ENCODE measurements at regions of chr17 and their contacts with region 1.

Region 1: DNA sequence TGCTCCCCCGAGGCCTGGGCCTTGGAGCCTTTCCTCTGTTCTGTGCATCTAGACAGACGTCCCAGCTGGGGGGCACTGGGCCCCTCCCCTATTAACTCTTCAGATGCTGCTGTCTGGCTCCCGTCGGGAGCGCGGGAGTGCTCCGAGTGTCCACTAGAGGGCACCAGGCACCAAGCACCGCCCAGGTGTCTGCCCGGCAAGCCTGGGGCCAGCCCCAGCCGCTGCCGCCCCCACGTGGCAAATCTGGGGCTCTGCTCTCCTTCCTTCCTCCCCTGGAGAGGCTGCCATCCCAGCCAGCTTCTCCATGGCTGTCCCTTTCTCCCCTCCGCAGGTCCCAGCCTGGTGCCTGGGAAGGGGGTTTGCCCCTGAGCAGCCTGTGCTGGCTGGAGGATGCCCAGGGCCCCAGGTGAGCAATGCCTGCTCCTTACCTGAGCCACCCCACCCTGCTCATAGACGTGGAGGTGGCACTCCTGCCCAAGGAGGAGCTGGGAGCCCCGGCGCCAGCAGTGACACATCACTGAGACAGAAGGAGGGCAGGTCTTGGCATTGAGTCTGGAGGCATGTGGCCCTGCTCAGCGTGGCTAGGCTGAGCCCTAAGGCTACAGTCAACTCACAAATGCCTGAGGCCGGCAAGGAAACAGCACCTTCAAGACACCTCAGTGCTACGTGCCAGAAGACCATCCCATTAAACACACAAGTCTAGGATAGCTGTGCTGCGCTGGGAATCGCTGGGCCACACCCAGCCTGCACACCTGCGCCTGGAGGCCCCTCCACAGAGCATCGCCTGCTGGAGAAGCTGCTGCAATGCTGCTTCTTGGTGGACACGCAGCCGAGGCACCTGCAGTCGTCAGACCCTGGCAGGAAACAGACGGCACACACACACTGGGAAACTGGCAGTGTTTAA is 19.7 kb downstream of the TMEM235 start:
- DNase-seq: peak; percentile 73 to 92 (median 84)
- ATAC-seq: peak; percentile 35
- H3K4me3 ChIP-seq: peak overlapping the region; percentile 52
- H3K4me3 Mint-ChIP-seq: peak overlapping the region; percentile 96
- H3K27ac ChIP-seq: peak overlapping the region; percentile 22 to 84
- H3K27ac Mint-ChIP-seq: peak overlapping the region; percentile 98
- H3K4me1 ChIP-seq: peaks cover 72% of the 10 kb centered on the region
- H3K4me1 Mint-ChIP-seq: peaks cover 51% of the 10 kb centered on the region
- H3K27me3 ChIP-seq: no peaks in the 10 kb centered on the region
- H3K27me3 Mint-ChIP-seq: no peaks in the 10 kb centered on the region
- CTCF ChIP-seq: peak; percentile 100

Region 2: DNA sequence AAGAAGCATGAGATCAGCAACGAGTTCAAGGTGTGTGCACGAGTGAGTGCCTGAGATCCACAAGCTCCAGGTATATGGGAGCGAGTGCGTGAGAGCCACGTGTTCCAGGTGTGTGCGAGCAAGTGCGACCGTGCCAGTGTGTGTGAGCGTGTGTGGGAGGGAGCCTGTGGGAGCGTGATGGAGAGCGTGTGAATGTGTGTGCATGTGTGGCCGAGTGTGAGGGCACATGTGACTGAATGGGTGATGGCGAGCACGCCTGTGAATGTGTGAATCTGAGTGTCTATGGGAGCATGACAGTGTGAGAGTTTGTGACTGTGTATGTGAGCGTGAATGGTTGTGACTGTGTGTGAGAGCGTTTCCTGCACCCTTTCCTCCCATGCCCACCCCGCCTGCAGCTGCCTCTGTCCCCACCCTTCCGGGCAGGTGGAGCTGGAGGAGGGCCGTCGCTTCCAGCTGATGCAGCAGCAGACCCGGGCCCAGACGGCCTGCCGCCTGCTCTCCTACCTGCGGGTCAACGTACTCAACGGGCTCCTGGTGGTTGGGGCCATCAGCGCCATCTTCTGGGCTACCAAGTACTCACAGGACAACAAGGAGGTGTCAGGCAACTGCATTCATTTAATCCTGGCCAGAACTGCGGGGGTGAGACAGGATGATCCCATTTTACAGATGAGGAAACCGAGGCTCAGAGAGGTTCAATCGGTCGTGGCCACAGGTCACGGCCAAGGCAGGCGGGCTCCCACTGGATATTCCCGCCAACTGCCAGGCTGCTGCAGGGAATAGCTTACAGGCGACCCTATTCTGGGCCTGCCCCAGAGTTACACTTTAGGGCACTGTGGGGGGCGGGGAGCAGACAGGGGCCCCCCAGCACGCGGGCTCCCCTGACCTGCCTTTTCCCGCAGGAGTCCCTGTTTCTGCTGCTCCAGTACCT is 116.9 kb before region 1 on chr17:
- CTCF ChIA-PET with region 1: no interaction called
- POLR2A ChIA-PET with region 1: interaction called, 20 read pairs
- intact Hi-C with region 1: loop called (anchors 5 kb)
- DNase-seq: peak; percentile 71 to 93 (median 78)
- ATAC-seq: peak; percentile 34
- H3K4me3 ChIP-seq: peak overlapping the region; percentile 94
- H3K4me3 Mint-ChIP-seq: peak overlapping the region; percentile 88
- H3K27ac ChIP-seq: peak overlapping the region; percentile 7 to 92
- H3K27ac Mint-ChIP-seq: peak overlapping the region; percentile 81
- H3K4me1 ChIP-seq: peaks cover 90% of the 10 kb centered on the region
- H3K4me1 Mint-ChIP-seq: peaks cover 80% of the 10 kb centered on the region
- H3K27me3 ChIP-seq: no peaks in the 10 kb centered on the region
- H3K27me3 Mint-ChIP-seq: no peaks in the 10 kb centered on the region
- CTCF ChIP-seq: peak; percentile 75

Region 3: DNA sequence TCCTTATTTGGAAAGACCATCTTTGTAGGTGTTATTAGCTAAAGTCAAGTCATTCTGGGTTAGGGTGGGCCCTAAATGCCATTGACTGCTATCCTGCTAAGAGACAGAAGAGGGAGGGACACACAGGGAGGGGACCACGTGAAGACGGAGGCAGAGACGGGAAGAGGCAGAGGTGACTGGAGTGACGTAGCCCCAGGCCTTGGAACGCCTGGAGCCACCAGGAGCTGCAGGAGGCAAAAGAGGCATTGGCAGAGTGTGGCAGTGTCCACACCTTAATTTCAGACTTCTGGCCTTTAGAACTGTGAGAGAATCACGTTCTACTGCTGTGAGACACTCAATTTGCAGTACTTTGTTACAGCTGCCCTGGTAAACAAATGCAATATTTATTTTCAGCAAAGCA is 50.7 kb before region 1 on chr17:
- CTCF ChIA-PET with region 1: no interaction called
- POLR2A ChIA-PET with region 1: no interaction called
- intact Hi-C with region 1: no loop called
- DNase-seq: no peak
- ATAC-seq: no peak
- H3K4me3 ChIP-seq: no peak overlapping the region
- H3K4me3 Mint-ChIP-seq: no peak overlapping the region
- H3K27ac ChIP-seq: no peak overlapping the region
- H3K27ac Mint-ChIP-seq: no peak overlapping the region
- H3K4me1 ChIP-seq: peaks cover 3% of the 10 kb centered on the region
- H3K4me1 Mint-ChIP-seq: no peaks in the 10 kb centered on the region
- H3K27me3 ChIP-seq: no peaks in the 10 kb centered on the region
- H3K27me3 Mint-ChIP-seq: no peaks in the 10 kb centered on the region
- CTCF ChIP-seq: no peak

Region 4: DNA sequence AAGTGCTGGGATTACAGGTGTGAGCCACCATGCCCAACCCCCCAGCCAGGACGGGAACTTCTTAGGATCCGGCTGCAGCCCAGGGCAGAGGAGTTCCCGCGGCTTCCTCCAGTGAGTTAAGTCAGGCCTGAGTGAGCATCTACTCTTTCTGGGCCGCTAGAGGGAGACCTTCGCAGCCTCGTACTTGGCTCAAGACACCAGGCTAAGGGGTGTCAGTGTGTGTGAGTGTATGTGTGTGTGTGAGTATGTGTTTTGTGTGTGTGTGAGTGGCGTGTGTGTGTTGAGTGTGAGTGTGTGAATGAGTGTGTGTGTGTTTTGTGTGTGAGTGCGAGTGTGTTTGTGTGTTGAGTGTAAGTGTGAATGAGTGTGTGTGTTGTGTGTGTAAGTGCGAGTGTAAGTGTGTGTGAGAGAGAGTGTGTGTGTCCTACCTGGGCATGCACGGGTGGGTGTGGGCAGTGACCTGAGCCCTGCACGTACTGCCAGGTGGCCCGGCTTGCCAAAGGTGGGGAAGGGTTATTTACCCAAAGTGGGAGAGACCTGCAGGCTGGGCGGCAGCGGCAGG is 38.7 kb after region 1 on chr17:
- CTCF ChIA-PET with region 1: interaction called, 18 read pairs
- POLR2A ChIA-PET with region 1: interaction called, 5 read pairs
- intact Hi-C with region 1: loop called (anchors 2 to 5 kb)
- DNase-seq: peak; percentile 62 to 91 (median 72)
- ATAC-seq: peak; percentile 98
- H3K4me3 ChIP-seq: no peak overlapping the region
- H3K4me3 Mint-ChIP-seq: no peak overlapping the region
- H3K27ac ChIP-seq: no peak overlapping the region
- H3K27ac Mint-ChIP-seq: no peak overlapping the region
- H3K4me1 ChIP-seq: peaks cover 16% of the 10 kb centered on the region
- H3K4me1 Mint-ChIP-seq: no peaks in the 10 kb centered on the region
- H3K27me3 ChIP-seq: no peaks in the 10 kb centered on the region
- H3K27me3 Mint-ChIP-seq: no peaks in the 10 kb centered on the region
- CTCF ChIP-seq: peak; percentile 77

Region 5: GRCh38 chr17:78329263-78330059 is 78.3 kb after region 1 on chr17:
- CTCF ChIA-PET with region 1: no interaction called
- POLR2A ChIA-PET with region 1: no interaction called
- intact Hi-C with region 1: no loop called
- DNase-seq: peak in 3 of 14 experiments; percentile 43 to 72 (median 65)
- ATAC-seq: no peak
- H3K4me3 ChIP-seq: no peak overlapping the region
- H3K4me3 Mint-ChIP-seq: no peak overlapping the region
- H3K27ac ChIP-seq: no peak overlapping the region
- H3K27ac Mint-ChIP-seq: peak overlapping the region; percentile 37
- H3K4me1 ChIP-seq: peaks cover 39% of the 10 kb centered on the region
- H3K4me1 Mint-ChIP-seq: peaks cover 35% of the 10 kb centered on the region
- H3K27me3 ChIP-seq: no peaks in the 10 kb centered on the region
- H3K27me3 Mint-ChIP-seq: no peaks in the 10 kb centered on the region
- CTCF ChIP-seq: no peak

Region 6: DNA sequence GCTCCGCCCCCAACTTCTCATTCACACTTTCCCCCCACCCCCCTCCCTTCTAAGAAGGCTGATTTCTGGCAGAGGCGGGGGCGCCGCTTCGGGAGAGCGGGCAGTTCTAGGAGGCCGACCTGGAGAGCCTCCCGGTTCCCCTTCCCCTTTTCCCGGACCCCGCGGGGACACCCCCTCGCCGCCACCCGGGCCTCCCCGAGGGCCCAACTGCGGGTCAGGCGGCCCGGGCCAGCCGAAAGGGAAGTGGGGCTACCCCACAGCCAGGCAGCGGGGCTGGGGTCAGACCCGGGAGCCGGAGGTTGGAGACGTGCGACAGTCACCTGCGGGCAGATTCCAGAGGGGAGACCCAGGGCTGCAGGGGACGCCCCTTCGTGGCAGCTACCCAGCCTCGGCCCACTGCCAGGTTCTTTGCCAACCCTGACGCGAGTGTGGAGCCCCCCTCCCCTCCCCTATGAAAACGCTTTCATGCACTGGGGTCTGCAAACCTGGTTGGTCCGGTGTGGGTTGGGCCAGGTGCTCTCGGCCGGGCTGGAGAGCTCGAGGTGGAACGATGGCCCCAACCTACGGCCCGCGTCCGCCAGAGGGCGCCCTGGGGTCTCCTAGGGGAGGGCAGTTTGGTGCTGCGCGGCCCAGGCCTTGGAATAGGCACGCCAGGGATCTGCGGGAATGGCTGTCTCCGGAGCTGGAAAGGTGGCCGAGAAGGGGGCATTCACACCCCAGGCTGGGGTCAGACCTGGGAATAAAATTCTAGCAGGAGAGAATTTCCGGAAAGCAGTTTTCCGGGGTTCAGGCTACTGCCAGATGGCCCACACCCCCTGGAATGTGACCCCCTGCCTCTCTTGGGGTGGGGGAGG is 109.5 kb after region 1 on chr17:
- CTCF ChIA-PET with region 1: interaction called, 12 read pairs
- POLR2A ChIA-PET with region 1: interaction called, 10 read pairs
- intact Hi-C with region 1: loop called (anchors 1 to 2 kb)
- DNase-seq: peak; percentile 78 to 95 (median 89)
- ATAC-seq: peak; percentile 13
- H3K4me3 ChIP-seq: peak overlapping the region; percentile 85
- H3K4me3 Mint-ChIP-seq: peak overlapping the region; percentile 95
- H3K27ac ChIP-seq: peak overlapping the region in 1 of 2 donors; percentile 67
- H3K27ac Mint-ChIP-seq: peak overlapping the region; percentile 97
- H3K4me1 ChIP-seq: peaks cover 47% of the 10 kb centered on the region
- H3K4me1 Mint-ChIP-seq: peaks cover 41% of the 10 kb centered on the region
- H3K27me3 ChIP-seq: peaks cover 2 to 3% of the 10 kb centered on the region in 2 experiments
- H3K27me3 Mint-ChIP-seq: no peaks in the 10 kb centered on the region
- CTCF ChIP-seq: peak; percentile 90

Region 7: GRCh38 chr17:78421484-78422266 is 170.5 kb after region 1 on chr17:
- CTCF ChIA-PET with region 1: interaction called, 35 read pairs
- POLR2A ChIA-PET with region 1: interaction called, 24 read pairs
- intact Hi-C with region 1: loop called (anchors 1 kb)
- DNase-seq: peak; percentile 56 to 85 (median 72)
- ATAC-seq: peak; percentile 97
- H3K4me3 ChIP-seq: no peak overlapping the region
- H3K4me3 Mint-ChIP-seq: no peak overlapping the region
- H3K27ac ChIP-seq: no peak overlapping the region
- H3K27ac Mint-ChIP-seq: peak overlapping the region; percentile 37
- H3K4me1 ChIP-seq: peaks cover 18% of the 10 kb centered on the region
- H3K4me1 Mint-ChIP-seq: peaks cover 31% of the 10 kb centered on the region
- H3K27me3 ChIP-seq: no peaks in the 10 kb centered on the region
- H3K27me3 Mint-ChIP-seq: no peaks in the 10 kb centered on the region
- CTCF ChIP-seq: peak; percentile 98